ENCODE measurements at regions of chr17 and their contacts with region 1.

Region 1: DNA sequence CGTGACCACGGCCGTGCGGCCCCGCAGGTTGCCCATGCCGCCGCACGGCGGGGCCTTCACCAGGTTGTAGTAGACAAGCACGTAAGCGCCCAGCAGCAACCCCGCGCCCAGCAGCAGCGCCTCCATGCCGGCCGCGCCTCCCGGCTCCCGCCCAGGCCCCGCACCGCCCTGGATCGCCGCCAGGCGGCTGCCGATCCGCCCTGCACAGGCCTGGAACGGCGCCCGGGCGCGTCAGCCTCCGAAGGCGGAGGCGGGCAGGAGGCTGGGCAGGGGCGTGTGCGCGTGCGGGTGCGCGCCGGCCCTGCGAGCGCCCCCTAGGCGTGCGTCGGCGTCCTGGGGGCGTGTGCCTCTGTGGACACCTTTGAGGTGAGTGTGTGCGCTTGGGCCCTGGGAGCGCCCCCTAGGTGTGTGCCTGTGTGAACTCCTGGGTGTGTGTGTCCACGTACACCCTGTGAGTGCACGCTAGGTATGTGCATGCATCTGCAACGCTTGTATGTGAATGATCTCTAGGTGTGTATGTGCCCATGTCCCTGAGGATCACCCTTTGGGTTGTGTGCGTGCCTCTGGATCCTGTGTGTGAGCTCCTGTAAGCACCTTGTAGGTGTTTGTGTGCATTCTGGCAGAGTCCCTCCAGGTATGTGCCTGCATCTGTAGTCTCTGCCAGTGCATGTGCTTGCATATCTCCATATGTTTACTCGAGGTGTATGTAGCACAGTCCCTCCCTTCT is at the start of gene DHRS13:
- DNase-seq: peak; percentile 97
- ATAC-seq: peak; percentile 91 to 94
- H3K4me3 ChIP-seq: peak within 1 kb of the TSS; percentile 87
- H3K27ac ChIP-seq: peak within 1 kb of the TSS; percentile 76 to 84
- H3K4me1 ChIP-seq: peaks cover 10% of the 10 kb centered on the region
- CTCF ChIP-seq: peak; percentile 100
- EP300 ChIP-seq: no peak
- POLR2A ChIP-seq: no peak
- RAD21 ChIP-seq: peak; percentile 63 to 70
- polyA plus RNA-seq, gene DHRS13: 7.0 and 7.3 TPM in 2 replicates

Region 2: DNA sequence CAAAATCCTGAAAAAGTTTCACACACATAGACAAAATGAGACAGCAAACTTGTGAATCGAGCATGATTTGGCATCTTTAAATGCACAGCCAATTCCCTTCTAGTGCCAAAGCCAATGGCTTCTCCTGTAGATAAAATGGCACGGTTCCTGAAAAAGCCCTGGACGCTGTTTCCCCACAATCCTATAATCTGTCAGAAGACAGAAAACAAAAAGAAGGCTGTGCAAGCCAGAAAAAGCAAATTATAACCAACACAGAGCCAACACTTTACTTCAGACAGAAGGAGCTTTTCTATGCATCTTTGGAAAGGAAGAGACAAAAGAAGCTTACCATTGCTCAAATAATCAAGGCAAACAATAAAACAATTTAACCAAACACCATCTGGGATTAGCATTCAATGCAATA is 84.2 kb before region 1 on chr17:
- CTCF ChIA-PET with region 1: no interaction called
- POLR2A ChIA-PET with region 1: no interaction called
- DNase-seq: no peak
- ATAC-seq: no peak
- H3K4me3 ChIP-seq: no peak overlapping the region
- H3K27ac ChIP-seq: no peak overlapping the region
- H3K4me1 ChIP-seq: no peaks in the 10 kb centered on the region
- CTCF ChIP-seq: no peak
- EP300 ChIP-seq: no peak
- POLR2A ChIP-seq: no peak
- RAD21 ChIP-seq: no peak

Region 3: DNA sequence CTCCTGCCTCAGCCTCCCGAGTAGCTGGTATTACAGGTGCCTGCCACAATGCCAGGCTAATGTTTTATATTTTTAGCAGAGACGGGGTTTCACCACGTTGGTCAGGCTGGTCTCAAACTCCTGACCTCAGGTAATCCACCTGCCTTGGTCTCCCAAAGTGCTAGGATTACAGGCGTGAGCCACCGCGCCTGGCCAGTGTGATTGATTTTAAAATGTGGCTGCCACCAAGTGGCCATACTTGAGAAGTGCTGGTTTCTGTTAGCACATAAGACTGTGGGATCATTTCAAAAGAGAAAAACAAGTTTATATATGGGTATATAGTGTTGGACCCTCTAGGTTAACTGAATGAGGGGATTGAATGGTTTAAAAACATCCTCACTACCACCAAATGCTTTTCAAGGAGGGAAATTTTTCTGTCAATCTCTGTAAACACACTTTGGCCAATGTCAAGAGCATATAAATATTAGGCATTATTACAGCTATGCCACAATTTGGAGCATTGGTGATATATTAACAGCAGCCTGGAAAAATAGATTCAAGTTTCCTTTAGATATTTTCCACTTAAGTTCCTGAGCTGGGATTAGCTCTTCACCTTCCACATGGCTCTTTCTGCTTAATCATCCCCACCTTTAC is 13.4 kb after region 1 on chr17:
- CTCF ChIA-PET with region 1: interaction called, 685 read pairs
- POLR2A ChIA-PET with region 1: no interaction called
- DNase-seq: peak; percentile 61 to 63
- ATAC-seq: peak; percentile 69 to 87
- H3K4me3 ChIP-seq: no peak overlapping the region
- H3K27ac ChIP-seq: no peak overlapping the region
- H3K4me1 ChIP-seq: no peaks in the 10 kb centered on the region
- CTCF ChIP-seq: peak; percentile 77
- EP300 ChIP-seq: no peak
- POLR2A ChIP-seq: no peak
- RAD21 ChIP-seq: peak; percentile 68 to 69